ENCODE measurements at regions of chr1 and their contacts with region 1.

Region 1: DNA sequence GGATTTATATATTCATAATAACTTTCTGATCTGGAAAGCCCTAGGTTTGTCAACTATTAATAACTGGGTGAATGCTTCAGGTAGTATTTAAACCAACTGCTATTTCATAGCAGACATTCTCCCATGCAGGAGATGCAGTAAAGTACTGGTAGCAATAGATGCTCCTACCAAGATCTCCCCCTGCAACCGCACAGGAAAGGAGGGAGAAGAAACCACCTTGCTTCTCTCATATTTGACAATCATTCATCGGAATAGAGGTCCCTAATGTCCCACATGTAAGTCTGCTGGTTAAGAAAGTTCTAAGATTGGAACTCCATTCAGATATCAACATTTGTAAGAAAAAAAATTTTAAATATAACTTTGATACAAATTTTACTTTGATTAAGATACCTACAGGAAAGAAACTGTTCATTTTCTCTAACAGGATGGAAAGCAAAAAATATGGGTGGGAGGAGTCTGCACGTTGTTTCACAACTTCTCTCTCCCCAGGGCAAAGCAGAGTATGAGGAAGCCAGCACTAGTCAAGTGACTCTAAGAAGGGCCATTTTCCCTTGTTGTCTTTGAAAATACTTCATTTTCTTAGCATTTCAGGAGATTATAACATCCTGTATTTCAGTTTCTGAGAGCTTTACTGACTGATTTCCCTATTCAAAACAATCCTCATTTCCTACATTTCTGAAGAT is at the start of gene PYHIN1:
- DNase-seq: peak; percentile 79
- H3K4me3 ChIP-seq: peak within 1 kb of the TSS; percentile 76
- H3K27ac ChIP-seq: peak within 1 kb of the TSS; percentile 76
- H3K4me1 ChIP-seq: peaks cover 37% of the 10 kb centered on the region
- CTCF ChIP-seq: no peak
- total RNA-seq, gene PYHIN1: 42.5 and 44.6 TPM in 2 replicates

Region 2: GRCh38 chr1:158840236-158840635 is 91.0 kb before region 1 on chr1:
- CTCF ChIA-PET with region 1: no interaction called
- POLR2A ChIA-PET with region 1: no interaction called
- intact Hi-C with region 1: no loop called
- DNase-seq: no peak
- H3K4me3 ChIP-seq: no peak overlapping the region
- H3K27ac ChIP-seq: no peak overlapping the region
- H3K4me1 ChIP-seq: no peaks in the 10 kb centered on the region
- CTCF ChIP-seq: no peak

Region 3: DNA sequence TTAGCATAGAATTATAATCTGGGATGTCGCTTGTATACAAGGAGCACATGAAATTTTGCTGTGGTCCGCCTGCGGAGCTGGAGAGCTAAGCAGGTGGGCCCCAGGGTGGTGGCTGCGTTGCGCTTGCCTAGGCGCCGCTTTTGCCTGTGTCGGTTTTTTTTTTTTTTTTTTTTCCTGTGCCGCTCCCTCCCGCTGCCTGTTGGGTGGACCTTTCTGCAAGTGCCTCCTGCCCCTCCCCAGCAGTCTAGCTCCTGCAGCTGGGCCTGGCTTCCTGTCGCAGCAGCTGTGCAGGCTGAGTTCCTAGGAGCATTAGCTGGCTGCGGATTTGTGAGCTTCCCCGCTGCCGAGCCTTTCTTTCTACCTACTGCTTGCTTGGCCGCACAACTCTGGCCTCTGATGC is 20.8 kb after region 1 on chr1:
- CTCF ChIA-PET with region 1: no interaction called
- POLR2A ChIA-PET with region 1: interaction called, 3 read pairs
- intact Hi-C with region 1: loop called (anchors 1 kb)
- DNase-seq: peak; percentile 97
- H3K4me3 ChIP-seq: peak overlapping the region; percentile 61
- H3K27ac ChIP-seq: peak overlapping the region; percentile 99
- H3K4me1 ChIP-seq: peaks cover 31% of the 10 kb centered on the region
- CTCF ChIP-seq: peak; percentile 52; the same call in 1 of the 2 replicates

Measured in OCI-LY7 (cell line).